K562 (cell line): ENCODE measurements at regions of chr5 and their contacts with region 1.

Region 1: DNA sequence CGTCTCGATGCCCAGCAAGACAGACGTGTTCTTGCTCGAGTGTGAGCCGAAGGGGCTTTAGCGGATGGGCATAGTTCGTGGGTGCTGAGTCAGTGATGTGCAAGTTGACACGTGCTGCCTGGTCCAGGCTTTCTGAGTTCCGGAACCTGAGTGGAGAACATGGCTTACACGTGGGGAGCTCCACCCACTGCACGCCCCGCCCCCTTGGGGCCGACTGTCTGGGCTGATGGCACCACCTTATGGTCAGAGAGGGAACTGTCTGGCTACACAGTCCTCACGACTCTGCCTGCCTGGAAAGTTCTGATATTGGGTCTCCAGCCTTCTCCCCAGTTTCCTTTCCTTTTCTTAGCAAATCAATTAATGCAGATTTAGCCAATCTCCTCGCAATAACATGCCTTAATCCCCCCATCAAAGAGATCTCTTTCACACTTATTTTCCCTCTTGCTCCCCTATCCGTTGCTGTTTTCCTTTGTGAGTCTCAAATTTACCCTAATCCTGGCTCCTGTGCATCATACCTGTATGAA is 3.8 kb upstream of the STC2 start:
- DNase-seq: peak; percentile 93 to 95 (median 94)
- ATAC-seq: peak; percentile 78
- H3K4me3 ChIP-seq: no peak overlapping the region
- H3K27ac ChIP-seq: no peak overlapping the region
- H3K4me1 ChIP-seq: peaks cover 4 to 25% of the 10 kb centered on the region in 2 experiments; a peak in 3 of 5 replicates
- H3K27me3 ChIP-seq: 0 out of 5 replicates have a peak, but pooled peaks cover 0 to 5% of the 10 kb centered on the region in 2 experiments
- CTCF ChIP-seq: peak; percentile 95 to 98 (median 97)
- EP300 ChIP-seq: no peak
- POLR2A ChIP-seq: no peak
- RAD21 ChIP-seq: peak; percentile 99

Region 2: GRCh38 chr5:173165177-173166016 is 166.6 kb before region 1 on chr5:
- CTCF ChIA-PET with region 1: no interaction called
- POLR2A ChIA-PET with region 1: no interaction called
- in situ Hi-C with region 1: no loop called
- intact Hi-C with region 1: loop called (anchors 1 kb)
- DNase-seq: no peak
- ATAC-seq: no peak
- H3K4me3 ChIP-seq: no peak overlapping the region
- H3K27ac ChIP-seq: no peak overlapping the region
- H3K4me1 ChIP-seq: no peaks in the 10 kb centered on the region
- H3K27me3 ChIP-seq: peaks cover 3 to 4% of the 10 kb centered on the region in 2 experiments; a peak in 2 of 5 replicates
- CTCF ChIP-seq: no peak
- EP300 ChIP-seq: no peak
- POLR2A ChIP-seq: no peak
- RAD21 ChIP-seq: no peak

Region 3: GRCh38 chr5:173293817-173294672 is 38.0 kb before region 1 on chr5:
- CTCF ChIA-PET with region 1: interaction called, 86 read pairs
- POLR2A ChIA-PET with region 1: interaction called, 22 read pairs
- in situ Hi-C with region 1: loop called (anchors 5 kb)
- intact Hi-C with region 1: loop called (anchors 1 kb)
- DNase-seq: peak; percentile 67 to 83 (median 72)
- ATAC-seq: peak; percentile 90
- H3K4me3 ChIP-seq: no peak overlapping the region; the same call in 1 of the 2 replicates
- H3K27ac ChIP-seq: no peak overlapping the region
- H3K4me1 ChIP-seq: peaks cover 11 to 19% of the 10 kb centered on the region in 2 experiments
- H3K27me3 ChIP-seq: peaks cover 17 to 34% of the 10 kb centered on the region in 2 experiments
- CTCF ChIP-seq: peak; percentile 91 to 94 (median 92)
- EP300 ChIP-seq: 0 out of 2 replicates have a peak, but pooled peaks have one; percentile 12
- POLR2A ChIP-seq: no peak
- RAD21 ChIP-seq: peak; percentile 97 to 98

Region 4: DNA sequence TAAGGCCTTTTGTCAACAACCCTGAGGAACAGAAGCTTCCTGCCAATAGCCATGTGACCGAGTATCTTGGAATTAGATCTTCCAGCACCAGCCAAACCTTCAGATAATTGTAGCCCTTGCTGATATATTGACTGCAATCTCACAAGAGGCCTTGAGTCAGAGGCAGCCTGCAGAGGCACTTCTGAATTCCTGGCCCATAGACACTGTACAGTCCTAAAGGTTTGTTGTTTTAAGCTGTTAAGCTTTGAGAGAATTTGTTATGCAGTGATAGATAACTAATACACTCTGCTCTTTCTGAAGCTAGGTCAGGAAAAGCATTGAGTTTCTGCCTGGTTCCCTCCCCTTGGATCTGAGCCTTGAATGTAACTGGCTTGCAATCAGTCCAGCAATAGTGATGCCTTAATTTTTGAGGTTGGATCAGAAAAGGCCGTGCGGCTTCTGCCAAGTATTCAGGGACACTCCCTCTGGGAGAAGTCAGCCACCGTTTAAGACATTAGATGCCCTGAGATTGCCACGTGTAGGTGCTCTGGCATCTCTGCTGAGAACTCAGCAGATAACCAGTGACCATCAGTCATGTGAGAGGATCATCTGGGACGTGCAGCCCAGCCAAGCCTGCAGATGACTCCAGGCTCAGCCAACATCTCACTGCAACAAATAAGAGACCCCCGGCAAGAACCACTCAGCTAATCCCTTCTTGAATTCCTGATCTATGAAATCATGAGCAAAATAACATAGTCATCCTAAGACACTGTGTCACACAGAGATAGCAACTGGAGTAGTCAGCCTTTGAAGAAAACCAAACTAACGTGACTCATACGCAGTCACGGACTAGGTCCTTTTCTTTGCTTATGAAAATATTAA is 123.0 kb after region 1 on chr5:
- CTCF ChIA-PET with region 1: no interaction called
- POLR2A ChIA-PET with region 1: no interaction called
- in situ Hi-C with region 1: no loop called
- intact Hi-C with region 1: no loop called
- DNase-seq: peak; percentile 60 to 79 (median 68)
- ATAC-seq: peak; percentile 92
- H3K4me3 ChIP-seq: no peak overlapping the region
- H3K27ac ChIP-seq: peak overlapping the region; percentile 81
- H3K4me1 ChIP-seq: peaks cover 3 to 25% of the 10 kb centered on the region in 2 experiments; a peak in 3 of 5 replicates
- H3K27me3 ChIP-seq: no peaks in the 10 kb centered on the region
- CTCF ChIP-seq: no peak; a peak in 1 of 6 replicates
- EP300 ChIP-seq: peak; percentile 77; the same call in 1 of the 2 replicates
- POLR2A ChIP-seq: no peak
- RAD21 ChIP-seq: no peak

Region 5: GRCh38 chr5:173573126-173573960 is 241.3 kb after region 1 on chr5:
- CTCF ChIA-PET with region 1: no interaction called
- POLR2A ChIA-PET with region 1: interaction called, 3 read pairs
- in situ Hi-C with region 1: no loop called
- intact Hi-C with region 1: loop called (anchors 10 kb)
- DNase-seq: peak; percentile 71 to 83 (median 76)
- ATAC-seq: peak; percentile 99
- H3K4me3 ChIP-seq: no peak overlapping the region
- H3K27ac ChIP-seq: no peak overlapping the region
- H3K4me1 ChIP-seq: peaks cover 0 to 4% of the 10 kb centered on the region in 2 experiments; a peak in 1 of 5 replicates
- H3K27me3 ChIP-seq: peaks cover 33 to 68% of the 10 kb centered on the region in 2 experiments
- CTCF ChIP-seq: peak; percentile 81 to 89 (median 87)
- EP300 ChIP-seq: no peak
- POLR2A ChIP-seq: no peak
- RAD21 ChIP-seq: peak; percentile 70 to 83